ENCODE measurements at regions of chr10 and their contacts with region 1.

Region 1: DNA sequence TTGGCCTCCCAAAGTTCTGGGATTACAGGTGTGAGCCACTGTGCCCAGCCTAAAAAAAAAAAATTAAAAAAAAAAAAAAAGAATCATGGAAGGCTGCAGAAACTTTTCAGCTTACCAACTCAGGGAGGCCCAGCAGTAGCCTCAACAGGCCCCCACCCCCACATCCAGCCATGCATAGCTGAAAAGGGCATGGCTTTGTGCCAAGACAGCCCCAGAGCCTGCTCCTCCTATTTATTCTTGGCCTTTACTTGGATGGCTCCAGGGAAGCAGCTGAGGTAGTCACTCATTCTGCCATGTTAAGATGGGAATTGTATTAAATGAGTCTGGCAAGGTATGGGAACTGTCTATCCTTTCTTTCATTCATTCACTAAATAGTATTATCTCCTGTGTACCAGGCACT is 13.7 kb upstream of the CNNM2 start:
- ATAC-seq: no peak
- H3K4me3 ChIP-seq: no peak overlapping the region
- H3K27ac ChIP-seq: no peak overlapping the region
- H3K4me1 ChIP-seq: no peaks in the 10 kb centered on the region

Region 2: DNA sequence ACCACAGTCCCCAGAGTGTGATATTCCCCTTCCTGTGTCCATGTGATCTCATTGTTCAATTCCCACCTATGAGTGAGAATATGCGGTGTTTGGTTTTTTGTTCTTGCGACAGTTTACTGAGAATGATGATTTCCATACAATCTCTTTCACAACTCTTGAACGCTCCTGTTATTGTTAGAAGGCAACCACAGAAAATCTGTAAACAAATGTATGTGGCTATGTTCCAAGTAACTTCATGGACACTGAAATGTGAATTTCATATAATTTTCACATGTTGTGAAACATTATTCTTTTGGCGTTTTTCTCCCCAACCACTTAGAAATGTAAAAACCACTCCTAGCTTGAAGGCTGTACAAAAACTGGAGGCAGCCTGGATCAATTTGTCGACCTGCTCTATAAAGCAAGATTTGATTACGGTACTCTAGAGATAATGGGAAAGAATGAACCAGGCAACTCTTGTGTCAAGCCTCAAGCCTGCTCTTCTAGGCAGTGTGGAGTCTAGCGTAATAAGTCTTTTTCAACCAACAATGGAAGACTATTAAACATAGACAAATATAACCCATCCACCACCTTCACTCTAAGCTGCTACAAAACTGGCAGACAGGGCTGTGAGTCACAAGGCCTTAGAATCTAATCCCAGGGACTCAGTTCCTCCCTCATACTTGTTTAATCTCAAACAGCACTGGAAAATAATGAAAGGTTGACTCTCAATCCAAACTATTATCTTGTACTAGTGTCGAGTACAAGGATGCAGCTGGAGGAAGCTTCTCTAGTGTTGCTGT is 212.9 kb before region 1 on chr10:
- in situ Hi-C with region 1: no loop called
- ATAC-seq: peak in 6 of 8 experiments; percentile 27 to 83 (median 53)
- H3K4me3 ChIP-seq: no peak overlapping the region
- H3K27ac ChIP-seq: no peak overlapping the region
- H3K4me1 ChIP-seq: peaks cover 0 to 3% of the 10 kb centered on the region in 2 donors

Region 3: GRCh38 chr10:102729029-102730026 is 175.0 kb before region 1 on chr10:
- in situ Hi-C with region 1: loop called in 5 of 9 experiments (anchors 10 to 25 kb)
- ATAC-seq: peak; percentile 97 to 100 (median 99)
- H3K4me3 ChIP-seq: no peak overlapping the region
- H3K27ac ChIP-seq: peak overlapping the region in 1 of 2 donors; percentile 15
- H3K4me1 ChIP-seq: peaks cover 0 to 11% of the 10 kb centered on the region in 2 donors

Region 4: DNA sequence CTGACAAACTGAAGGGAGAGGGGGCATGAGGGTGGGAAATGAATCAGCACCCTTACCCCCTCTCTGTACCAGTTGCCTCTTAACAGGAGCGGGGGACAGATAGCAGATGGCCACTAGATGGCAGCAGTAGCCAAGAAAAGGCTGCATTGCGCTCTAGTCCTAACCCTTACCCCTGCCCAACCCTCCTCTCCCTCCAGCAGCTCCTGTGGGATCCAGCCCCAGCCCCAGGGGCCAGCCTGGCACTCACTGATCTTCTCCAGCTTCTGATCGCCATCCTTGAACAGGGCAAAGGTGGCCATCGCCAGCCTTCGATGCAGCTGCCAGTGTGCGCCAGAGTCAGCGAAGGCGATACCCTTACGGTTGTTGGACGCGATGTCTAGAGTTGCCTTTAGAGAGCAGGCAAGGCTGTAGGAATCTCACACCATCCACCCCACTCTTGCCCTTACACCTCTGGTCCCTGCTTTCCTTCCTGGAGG is 69.3 kb before region 1 on chr10:
- in situ Hi-C with region 1: loop called in 2 of 9 experiments (anchors 5 to 10 kb)
- ATAC-seq: peak; percentile 95 to 100 (median 100)
- H3K4me3 ChIP-seq: no peak overlapping the region
- H3K27ac ChIP-seq: no peak overlapping the region
- H3K4me1 ChIP-seq: peaks cover 0 to 2% of the 10 kb centered on the region in 2 donors

Measured in motor neuron (in vitro differentiated cells).